Activated CD4-positive, alpha-beta memory T cell treated with anti-CD3 and anti-CD28 coated beads for 36 hours (primary cell): ENCODE measurements at regions of chrX and their contacts with region 1.

Region 1: DNA sequence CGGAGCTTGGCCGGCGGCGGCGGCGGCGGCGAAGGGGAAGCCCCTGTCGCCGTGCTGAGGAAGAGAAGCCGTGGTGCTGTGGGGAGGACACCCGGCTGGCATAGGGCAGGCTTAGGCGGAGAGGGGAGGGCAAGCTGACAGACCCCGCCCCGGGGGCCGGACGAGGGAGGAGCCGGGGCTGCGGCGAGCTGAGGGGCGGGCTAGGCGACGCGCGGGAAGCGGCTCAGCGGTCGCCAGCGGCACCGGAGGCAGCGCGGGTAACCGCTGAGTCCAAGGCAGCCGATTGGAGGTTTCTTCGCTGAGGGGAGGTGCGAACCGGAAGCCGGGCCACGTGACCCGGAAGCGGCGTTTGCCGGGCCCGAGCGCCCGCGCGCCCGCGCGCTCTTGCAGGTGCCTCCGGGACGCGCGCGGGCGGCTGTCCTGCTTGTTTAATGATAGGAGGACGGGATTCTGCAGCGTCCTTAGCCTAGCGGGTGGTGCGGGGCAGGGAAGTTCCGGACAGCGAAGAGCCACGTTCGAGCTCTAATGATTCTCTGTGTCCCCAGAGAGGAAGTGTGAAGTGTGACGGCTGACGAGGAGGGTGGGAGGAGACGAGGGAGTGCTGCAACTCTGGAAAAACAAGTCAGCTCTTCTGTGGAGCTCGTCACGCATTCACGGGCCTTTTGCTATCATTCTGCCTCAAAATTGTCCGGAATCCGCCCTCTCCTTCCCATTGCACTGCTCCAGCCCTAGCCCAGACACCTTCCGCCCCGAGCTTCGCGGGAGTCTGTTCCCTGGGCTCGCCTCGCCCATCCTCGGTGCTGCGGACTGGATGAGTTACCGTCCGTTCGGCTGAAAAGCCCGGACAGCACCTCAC is at the start of gene AP1S2:
- DNase-seq: peak; percentile 94
- H3K4me3 Mint-ChIP-seq: peak within 1 kb of the TSS; percentile 86
- H3K27ac Mint-ChIP-seq: peak within 1 kb of the TSS; percentile 95
- H3K4me1 Mint-ChIP-seq: peaks cover 23% of the 10 kb centered on the region
- H3K27me3 Mint-ChIP-seq: no peaks in the 10 kb centered on the region
- total RNA-seq, gene AP1S2: 21.4 to 29.3 TPM

Region 2: GRCh38 chrX:15737960-15738902 is 116.7 kb before region 1 on chrX and contains the start of gene CA5B:
- CTCF ChIA-PET with region 1: interaction called, 3 read pairs
- POLR2A ChIA-PET with region 1: interaction called, 4 read pairs
- intact Hi-C with region 1: loop called (anchors 1 kb)
- DNase-seq: peak; percentile 97
- H3K4me3 Mint-ChIP-seq: peak within 1 kb of the TSS; percentile 87
- H3K27ac Mint-ChIP-seq: peak within 1 kb of the TSS; percentile 80
- H3K4me1 Mint-ChIP-seq: peaks cover 38% of the 10 kb centered on the region
- H3K27me3 Mint-ChIP-seq: no peaks in the 10 kb centered on the region
- total RNA-seq, gene CA5B: 13.1 to 15.5 TPM

Region 3: GRCh38 chrX:15789979-15790768 is 64.8 kb before region 1 on chrX and contains the start of gene ZRSR2:
- CTCF ChIA-PET with region 1: interaction called, 3 read pairs
- POLR2A ChIA-PET with region 1: interaction called, 6 read pairs
- intact Hi-C with region 1: loop called (anchors 2 kb)
- DNase-seq: peak; percentile 91
- H3K4me3 Mint-ChIP-seq: no peak within 1 kb of the TSS
- H3K27ac Mint-ChIP-seq: no peak within 1 kb of the TSS
- H3K4me1 Mint-ChIP-seq: peaks cover 26% of the 10 kb centered on the region
- H3K27me3 Mint-ChIP-seq: no peaks in the 10 kb centered on the region
- total RNA-seq, gene ZRSR2: 16.2 to 17.3 TPM

Region 4: DNA sequence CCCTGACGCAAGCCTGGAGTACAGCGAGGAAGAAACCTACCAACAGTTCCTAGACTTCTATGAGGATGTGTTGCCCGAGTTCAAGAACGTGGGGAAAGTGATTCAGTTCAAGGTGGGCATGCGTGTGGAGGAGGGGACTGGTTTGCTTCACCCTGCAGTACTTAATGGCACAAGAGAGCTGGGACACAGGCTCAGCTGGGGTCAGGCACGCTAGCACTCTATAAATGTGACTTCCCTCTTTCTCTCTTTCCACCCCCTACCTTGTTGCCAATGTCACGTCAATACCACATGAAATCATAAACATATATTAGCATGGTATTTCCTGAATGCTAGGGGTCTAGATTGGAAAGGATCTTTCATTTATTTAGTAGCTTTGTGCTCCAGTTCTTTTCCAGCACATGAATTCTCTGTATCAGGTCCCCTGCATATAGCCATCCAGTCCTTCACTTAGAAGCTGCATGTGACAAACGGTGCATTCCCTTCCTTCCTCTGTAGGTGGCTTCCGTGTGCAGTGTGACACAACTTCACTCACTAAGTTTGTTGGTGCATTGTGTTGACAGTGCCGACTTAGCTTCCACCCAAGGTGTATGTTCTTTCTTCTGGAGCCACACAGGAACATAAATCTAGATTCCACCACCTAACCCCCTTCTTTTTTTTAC is 39.0 kb before region 1 on chrX:
- CTCF ChIA-PET with region 1: interaction called, 3 read pairs
- POLR2A ChIA-PET with region 1: no interaction called
- intact Hi-C with region 1: loop called (anchors 2 kb)
- DNase-seq: peak; percentile 46
- H3K4me3 Mint-ChIP-seq: no peak overlapping the region
- H3K27ac Mint-ChIP-seq: peak overlapping the region; percentile 23
- H3K4me1 Mint-ChIP-seq: peaks cover 37% of the 10 kb centered on the region
- H3K27me3 Mint-ChIP-seq: no peaks in the 10 kb centered on the region

Region 5: DNA sequence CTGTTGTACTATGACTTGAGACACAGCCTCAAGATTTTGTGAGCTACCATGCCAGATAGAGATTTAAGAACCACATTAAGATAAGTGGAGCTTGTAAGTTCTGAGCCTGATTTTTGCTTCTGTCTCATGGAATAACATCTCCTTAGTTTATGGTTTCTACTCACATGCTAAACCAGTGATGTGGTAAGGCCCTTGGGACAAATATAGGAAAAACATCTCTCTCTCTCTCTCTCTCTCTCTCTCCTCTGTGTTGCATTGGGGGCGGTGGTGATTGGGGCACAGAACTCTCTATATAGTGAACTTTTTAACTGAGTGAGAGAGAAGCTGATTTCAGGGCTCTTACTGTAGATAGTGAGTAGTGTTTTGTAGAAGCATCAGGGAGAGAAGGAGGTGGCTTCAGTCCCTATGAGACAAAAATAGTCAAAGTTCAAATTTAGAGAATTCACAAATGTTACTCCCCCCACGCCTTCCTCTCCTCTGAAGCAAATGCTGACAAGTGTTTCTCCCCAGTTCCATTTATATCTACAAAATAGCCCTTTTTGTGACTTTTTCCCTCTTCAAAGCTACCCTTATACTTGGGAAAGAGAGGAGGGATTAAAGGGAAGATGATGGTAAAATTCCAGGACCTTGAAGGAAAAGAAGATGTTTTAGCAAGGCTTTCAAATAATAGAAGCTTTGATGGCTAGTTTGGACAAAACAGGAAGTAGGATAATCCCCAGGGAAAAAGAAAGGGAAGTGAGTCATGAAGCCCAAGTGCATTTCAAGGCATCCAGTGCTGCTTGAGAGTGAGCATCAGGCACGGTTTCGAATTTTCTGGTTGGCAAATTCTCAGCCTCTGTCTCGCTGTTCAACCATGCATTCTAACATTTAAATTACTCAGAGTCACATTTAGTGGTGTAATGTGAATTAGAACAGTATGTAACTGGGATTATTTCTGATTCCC is 134.0 kb after region 1 on chrX:
- CTCF ChIA-PET with region 1: no interaction called
- POLR2A ChIA-PET with region 1: no interaction called
- intact Hi-C with region 1: loop called (anchors 10 kb)
- DNase-seq: no peak
- H3K4me3 Mint-ChIP-seq: no peak overlapping the region
- H3K27ac Mint-ChIP-seq: no peak overlapping the region
- H3K4me1 Mint-ChIP-seq: peaks cover 8% of the 10 kb centered on the region
- H3K27me3 Mint-ChIP-seq: peaks cover 2% of the 10 kb centered on the region

Region 6: GRCh38 chrX:16719334-16720084 is 864.6 kb after region 1 on chrX and contains the start of gene SYAP1:
- CTCF ChIA-PET with region 1: no interaction called
- POLR2A ChIA-PET with region 1: no interaction called
- intact Hi-C with region 1: loop called (anchors 1 kb)
- DNase-seq: peak; percentile 94
- H3K4me3 Mint-ChIP-seq: peak within 1 kb of the TSS; percentile 92
- H3K27ac Mint-ChIP-seq: peak within 1 kb of the TSS; percentile 89
- H3K4me1 Mint-ChIP-seq: peaks cover 18% of the 10 kb centered on the region
- H3K27me3 Mint-ChIP-seq: no peaks in the 10 kb centered on the region
- total RNA-seq, gene SYAP1: 20.8 to 22.4 TPM